ENCODE measurements at regions of chr1 and their contacts with region 1.

Region 1: GRCh38 chr1:152052606-152053005 is 15.8 kb upstream of the S100A11 start:
- DNase-seq: peak; percentile 95
- ATAC-seq: peak; percentile 61

Region 2: DNA sequence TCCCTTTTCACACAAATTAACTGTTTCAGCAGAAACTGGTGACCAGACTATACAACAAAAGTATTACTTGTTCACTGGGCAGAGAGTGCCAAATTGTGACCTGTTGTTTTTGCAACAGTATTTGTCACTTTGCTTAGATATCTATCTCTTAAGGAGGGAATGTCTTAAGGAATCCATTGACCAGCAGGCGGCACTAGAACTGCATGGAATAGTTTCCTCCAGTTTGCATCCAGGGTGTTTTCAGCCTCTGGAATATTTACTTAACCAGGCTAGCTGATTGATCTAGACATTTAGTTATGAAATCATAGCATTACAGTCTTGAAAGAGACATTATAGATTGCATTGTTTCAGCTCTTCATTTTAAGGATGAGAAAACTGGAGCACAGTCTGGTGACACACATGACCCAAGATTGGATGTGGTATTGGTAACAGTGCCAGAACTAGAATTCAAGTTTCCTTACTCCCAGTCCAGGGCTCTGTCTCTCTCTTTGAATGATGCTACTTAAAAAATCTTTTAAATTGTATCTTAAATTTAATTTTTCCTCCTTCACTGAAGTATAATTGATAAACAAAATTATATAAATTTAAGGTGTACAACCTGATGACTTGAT is 89.5 kb after region 1 on chr1:
- intact Hi-C with region 1: loop called (anchors 5 kb)
- DNase-seq: peak; percentile 75
- ATAC-seq: peak; percentile 67

Region 3: GRCh38 chr1:152189657-152190442 is 137.2 kb after region 1 on chr1:
- intact Hi-C with region 1: loop called (anchors 10 kb)
- DNase-seq: peak; percentile 76
- ATAC-seq: peak; percentile 76

Region 4: GRCh38 chr1:152459596-152460528 is 407.3 kb after region 1 on chr1:
- intact Hi-C with region 1: loop called (anchors 10 kb)
- DNase-seq: peak; percentile 80
- ATAC-seq: peak; percentile 79

Region 5: GRCh38 chr1:152495066-152495675 is 442.6 kb after region 1 on chr1:
- intact Hi-C with region 1: no loop called
- DNase-seq: no peak
- ATAC-seq: no peak